Activated T-helper 1 cell treated with anti-CD3 and anti-CD28 coated beads, Interleukin-12 subunit alpha, Interleukin-12 subunit beta, Interleukin-2, Interleukin-4 antibody, amounts not matched to agents 30 ng/mL and 10 ng/mL and 1 ng/mL, durations not matched to agents 14 hours and 24 hours and 36 hours (primary cell): ENCODE measurements at regions of chrX and their contacts with region 1.

Region 1: DNA sequence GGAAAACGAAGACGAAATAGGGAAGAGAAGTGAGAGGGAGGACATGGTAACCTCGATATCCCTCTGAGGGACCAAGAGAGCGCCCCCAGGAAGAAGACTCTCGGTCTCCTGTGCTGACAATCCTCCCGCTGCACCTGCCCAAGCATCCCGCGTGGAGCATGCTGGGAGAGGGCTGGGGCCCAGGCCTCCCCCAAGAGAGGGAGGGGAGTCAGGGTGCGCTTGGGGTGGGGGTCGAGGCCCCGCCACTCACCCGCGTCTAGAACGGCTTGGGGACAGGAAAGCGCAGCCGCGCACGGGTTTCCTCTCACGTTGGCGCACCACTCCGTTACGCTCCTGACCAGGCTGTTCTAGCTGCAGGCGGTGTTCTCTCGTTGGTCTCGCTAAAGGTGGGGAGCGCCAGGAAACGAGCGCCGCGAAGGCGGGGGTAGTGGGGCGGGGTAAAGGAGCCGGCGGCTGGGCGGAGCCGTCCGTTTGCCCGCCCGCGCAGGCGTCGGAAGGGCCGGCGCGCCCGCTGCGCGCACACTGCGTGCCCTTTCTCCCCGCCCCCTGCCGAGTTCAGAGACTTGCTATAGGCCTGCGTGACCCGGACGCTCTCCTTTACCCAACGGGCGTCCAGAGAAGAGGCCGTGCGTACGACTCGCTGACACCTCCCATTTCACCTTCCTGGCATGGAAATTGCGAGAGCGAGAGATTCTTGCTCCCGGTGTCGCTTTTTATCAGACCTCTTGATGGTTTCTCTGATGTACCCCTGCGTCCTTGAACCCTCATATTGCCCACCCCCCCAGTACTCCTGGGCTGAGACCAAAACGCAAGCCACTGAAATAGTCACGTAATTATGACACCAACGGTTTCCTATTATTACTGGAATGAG is at the start of gene C1GALT1C1:
- DNase-seq: peak; percentile 88
- H3K4me3 Mint-ChIP-seq: peak within 1 kb of the TSS; percentile 93
- H3K27ac Mint-ChIP-seq: peak within 1 kb of the TSS; percentile 99
- H3K4me1 Mint-ChIP-seq: peaks cover 16% of the 10 kb centered on the region
- H3K27me3 Mint-ChIP-seq: no peaks in the 10 kb centered on the region
- total RNA-seq, gene C1GALT1C1: 21.0 and 23.7 TPM in 2 replicates

Region 2: GRCh38 chrX:120250522-120251271 is 379.2 kb before region 1 on chrX and contains the start of gene ZBTB33:
- intact Hi-C with region 1: loop called (anchors 2 kb)
- DNase-seq: peak; percentile 79
- H3K4me3 Mint-ChIP-seq: peak within 1 kb of the TSS; percentile 96
- H3K27ac Mint-ChIP-seq: peak within 1 kb of the TSS; percentile 96
- H3K4me1 Mint-ChIP-seq: peaks cover 17% of the 10 kb centered on the region
- H3K27me3 Mint-ChIP-seq: no peaks in the 10 kb centered on the region
- total RNA-seq, gene ZBTB33: 13.0 and 13.4 TPM in 2 replicates

Region 3: GRCh38 chrX:120485638-120486520 is 144.0 kb before region 1 on chrX:
- intact Hi-C with region 1: loop called (anchors 1 kb)
- DNase-seq: peak; percentile 40
- H3K4me3 Mint-ChIP-seq: peak overlapping the region; percentile 77
- H3K27ac Mint-ChIP-seq: peak overlapping the region; percentile 76
- H3K4me1 Mint-ChIP-seq: peaks cover 12% of the 10 kb centered on the region
- H3K27me3 Mint-ChIP-seq: no peaks in the 10 kb centered on the region

Region 4: GRCh38 chrX:120560842-120561633 is 68.9 kb before region 1 on chrX and contains the start of gene CUL4B:
- intact Hi-C with region 1: loop called (anchors 1 kb)
- DNase-seq: peak; percentile 89
- H3K4me3 Mint-ChIP-seq: peak within 1 kb of the TSS; percentile 99
- H3K27ac Mint-ChIP-seq: peak within 1 kb of the TSS; percentile 97
- H3K4me1 Mint-ChIP-seq: peaks cover 30% of the 10 kb centered on the region
- H3K27me3 Mint-ChIP-seq: no peaks in the 10 kb centered on the region
- total RNA-seq, gene CUL4B: 25.2 and 26.5 TPM in 2 replicates

Region 5: DNA sequence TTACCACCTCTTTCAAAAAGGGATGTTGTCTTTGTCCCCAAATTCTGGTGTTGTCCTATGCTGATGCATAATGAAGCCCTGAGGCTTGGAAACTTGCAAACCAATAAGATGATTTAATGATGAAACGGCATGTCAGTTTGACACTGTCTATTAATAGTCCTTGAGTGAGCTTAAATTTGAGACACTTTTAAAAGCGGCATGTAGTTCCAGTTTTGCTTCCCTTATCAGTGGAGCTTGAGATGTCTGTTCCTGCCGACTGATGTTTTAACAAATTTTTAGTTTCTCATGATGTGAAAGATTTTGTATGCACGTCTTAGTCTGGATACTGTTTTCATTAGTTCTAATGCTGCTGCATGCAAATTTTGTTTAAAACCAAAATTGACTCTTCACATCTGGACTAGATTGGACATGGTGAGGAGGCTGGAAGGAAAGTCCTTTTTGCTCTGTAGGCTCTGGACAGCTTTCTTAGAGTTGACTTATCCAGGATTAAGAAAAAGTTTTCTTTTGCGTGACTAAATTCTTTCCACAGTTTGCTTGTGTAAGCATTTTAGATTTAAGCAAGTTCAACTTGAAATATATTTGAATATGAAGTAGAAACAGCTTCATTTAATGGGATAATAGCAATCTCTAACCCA is 11.8 kb before region 1 on chrX:
- intact Hi-C with region 1: no loop called
- DNase-seq: no peak
- H3K4me3 Mint-ChIP-seq: no peak overlapping the region
- H3K27ac Mint-ChIP-seq: no peak overlapping the region
- H3K4me1 Mint-ChIP-seq: no peaks in the 10 kb centered on the region
- H3K27me3 Mint-ChIP-seq: no peaks in the 10 kb centered on the region

Region 6: DNA sequence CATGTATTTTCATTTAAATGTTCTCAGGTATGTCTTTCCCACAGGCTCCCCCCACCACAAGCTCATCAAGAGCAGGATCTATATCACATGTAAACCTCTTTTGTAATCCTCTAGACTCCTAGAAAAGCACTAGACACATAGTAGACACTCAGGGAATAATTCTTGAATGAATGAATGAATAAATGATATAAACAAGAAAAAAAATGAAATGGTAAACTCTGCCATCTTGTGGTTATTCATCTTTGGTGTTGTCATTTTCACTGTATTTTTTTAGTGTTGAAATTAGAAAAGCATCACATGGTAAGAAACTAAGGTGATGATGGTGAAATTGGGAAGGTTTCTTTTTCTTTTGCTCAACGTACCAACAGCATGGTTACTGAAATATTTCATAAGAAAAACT is 34.2 kb after region 1 on chrX:
- intact Hi-C with region 1: no loop called
- DNase-seq: no peak
- H3K4me3 Mint-ChIP-seq: no peak overlapping the region
- H3K27ac Mint-ChIP-seq: no peak overlapping the region
- H3K4me1 Mint-ChIP-seq: no peaks in the 10 kb centered on the region
- H3K27me3 Mint-ChIP-seq: no peaks in the 10 kb centered on the region

Region 7: GRCh38 chrX:120697053-120697452 is 67.2 kb after region 1 on chrX:
- intact Hi-C with region 1: loop called (anchors 1 kb)
- DNase-seq: peak; percentile 62
- H3K4me3 Mint-ChIP-seq: peak overlapping the region; percentile 38
- H3K27ac Mint-ChIP-seq: peak overlapping the region; percentile 93
- H3K4me1 Mint-ChIP-seq: peaks cover 21% of the 10 kb centered on the region
- H3K27me3 Mint-ChIP-seq: no peaks in the 10 kb centered on the region

Region 8: GRCh38 chrX:120769576-120770341 is 139.9 kb after region 1 on chrX:
- intact Hi-C with region 1: loop called (anchors 2 kb)
- DNase-seq: no peak
- H3K4me3 Mint-ChIP-seq: no peak overlapping the region
- H3K27ac Mint-ChIP-seq: no peak overlapping the region
- H3K4me1 Mint-ChIP-seq: no peaks in the 10 kb centered on the region
- H3K27me3 Mint-ChIP-seq: no peaks in the 10 kb centered on the region